ENCODE measurements at regions of chr7 and their contacts with region 1.

Region 1: DNA sequence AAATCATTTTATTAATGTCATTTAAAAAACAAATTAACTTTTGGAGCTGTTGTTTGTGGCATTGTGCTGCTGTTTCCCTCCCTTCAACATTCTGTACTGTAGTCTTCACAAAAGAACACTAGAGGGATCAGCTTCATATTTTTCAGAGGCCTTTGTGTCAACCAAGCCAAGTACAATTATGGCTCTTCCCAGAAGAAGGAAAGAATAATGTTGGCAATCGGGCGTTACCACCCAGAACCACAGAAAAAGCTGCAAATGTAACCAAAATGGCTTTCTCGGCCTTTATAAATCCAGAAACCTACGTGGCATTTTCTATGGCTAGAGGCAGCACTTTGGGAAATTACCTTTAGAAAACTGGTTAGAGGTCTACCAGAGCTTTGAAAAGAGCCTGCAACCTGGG is 98.8 kb upstream of the COL1A2 start:
- DNase-seq: peak; percentile 94
- H3K4me3 ChIP-seq: peak overlapping the region; percentile 74
- H3K27ac ChIP-seq: peak overlapping the region; percentile 99
- H3K4me1 ChIP-seq: peaks cover 64% of the 10 kb centered on the region
- H3K27me3 ChIP-seq: no peaks in the 10 kb centered on the region

Region 2: DNA sequence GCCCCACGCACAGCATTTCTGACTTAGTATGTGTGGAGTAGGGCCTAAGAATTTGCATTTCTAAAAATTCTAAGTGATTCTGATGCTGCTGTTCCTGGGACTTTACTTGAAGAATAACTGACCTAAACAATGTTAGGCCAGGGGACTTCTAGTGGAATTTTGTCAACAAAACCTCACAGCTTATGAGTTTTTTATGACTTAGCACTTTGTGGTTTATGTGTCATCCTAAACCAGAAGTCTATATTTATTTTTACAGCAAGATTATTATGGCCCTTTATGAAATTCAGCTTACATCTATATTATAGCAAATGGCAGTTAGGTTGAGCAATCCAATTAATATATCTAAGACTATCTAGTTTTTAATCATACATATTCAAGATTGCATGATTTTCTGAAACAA is 267.1 kb before region 1 on chr7:
- in situ Hi-C with region 1: no loop called
- DNase-seq: peak; percentile 53
- H3K4me3 ChIP-seq: no peak overlapping the region
- H3K27ac ChIP-seq: no peak overlapping the region
- H3K4me1 ChIP-seq: peaks cover 9% of the 10 kb centered on the region
- H3K27me3 ChIP-seq: peaks cover 5% of the 10 kb centered on the region; the same call in 1 of the 2 replicates

Region 3: GRCh38 chr7:94395141-94396036 is 99.5 kb after region 1 on chr7:
- in situ Hi-C with region 1: loop called (anchors 10 kb)
- DNase-seq: peak; percentile 89
- H3K4me3 ChIP-seq: peak overlapping the region; percentile 99
- H3K27ac ChIP-seq: peak overlapping the region; percentile 100
- H3K4me1 ChIP-seq: peaks cover 28% of the 10 kb centered on the region
- H3K27me3 ChIP-seq: no peaks in the 10 kb centered on the region

Region 4: GRCh38 chr7:94436018-94436604 is 140.3 kb after region 1 on chr7:
- in situ Hi-C with region 1: loop called (anchors 5 kb)
- DNase-seq: peak; percentile 87
- H3K4me3 ChIP-seq: peak overlapping the region; percentile 47; the same call in 1 of the 2 replicates
- H3K27ac ChIP-seq: no peak overlapping the region
- H3K4me1 ChIP-seq: peaks cover 19% of the 10 kb centered on the region
- H3K27me3 ChIP-seq: no peaks in the 10 kb centered on the region

Region 5: GRCh38 chr7:94649450-94649849 is 353.6 kb after region 1 on chr7:
- in situ Hi-C with region 1: loop called (anchors 10 kb)
- DNase-seq: no peak
- H3K4me3 ChIP-seq: no peak overlapping the region
- H3K27ac ChIP-seq: no peak overlapping the region
- H3K4me1 ChIP-seq: no peaks in the 10 kb centered on the region
- H3K27me3 ChIP-seq: no peaks in the 10 kb centered on the region

Measured in GM23248 (cell line).